A549 (cell line): ENCODE measurements at regions of chr17 and their contacts with region 1.

Region 1: GRCh38 chr17:75405365-75406221 is at the start of gene GRB2:
- DNase-seq: peak; percentile 97 to 99
- ATAC-seq: peak; percentile 82 to 92
- H3K4me3 ChIP-seq: peak within 1 kb of the TSS; percentile 96
- H3K27ac ChIP-seq: peak within 1 kb of the TSS; percentile 91 to 95
- H3K4me1 ChIP-seq: peaks cover 13% of the 10 kb centered on the region; the same call in 1 of the 3 replicates
- CTCF ChIP-seq: no peak
- EP300 ChIP-seq: no peak
- POLR2A ChIP-seq: peak; percentile 93
- RAD21 ChIP-seq: no peak
- polyA plus RNA-seq, gene GRB2: 87.5 and 91.4 TPM in 2 replicates

Region 2: GRCh38 chr17:75261336-75262111 is 144.1 kb before region 1 on chr17 and contains the starts of genes GGA3 and MRPS7:
- CTCF ChIA-PET with region 1: no interaction called
- POLR2A ChIA-PET with region 1: interaction called, 10 read pairs
- DNase-seq: peak; percentile 95 to 96
- ATAC-seq: peak; percentile 96 to 97
- H3K4me3 ChIP-seq: peak within 1 kb of the TSS; percentile 97
- H3K27ac ChIP-seq: peak within 1 kb of the TSS; percentile 96
- H3K4me1 ChIP-seq: peaks cover 22% of the 10 kb centered on the region
- CTCF ChIP-seq: no peak
- EP300 ChIP-seq: no peak
- POLR2A ChIP-seq: peak; percentile 91
- RAD21 ChIP-seq: no peak
- polyA plus RNA-seq, gene GGA3: 40.9 and 43.6 TPM in 2 replicates
- polyA plus RNA-seq, gene MRPS7: 144 and 157 TPM in 2 replicates

Region 3: DNA sequence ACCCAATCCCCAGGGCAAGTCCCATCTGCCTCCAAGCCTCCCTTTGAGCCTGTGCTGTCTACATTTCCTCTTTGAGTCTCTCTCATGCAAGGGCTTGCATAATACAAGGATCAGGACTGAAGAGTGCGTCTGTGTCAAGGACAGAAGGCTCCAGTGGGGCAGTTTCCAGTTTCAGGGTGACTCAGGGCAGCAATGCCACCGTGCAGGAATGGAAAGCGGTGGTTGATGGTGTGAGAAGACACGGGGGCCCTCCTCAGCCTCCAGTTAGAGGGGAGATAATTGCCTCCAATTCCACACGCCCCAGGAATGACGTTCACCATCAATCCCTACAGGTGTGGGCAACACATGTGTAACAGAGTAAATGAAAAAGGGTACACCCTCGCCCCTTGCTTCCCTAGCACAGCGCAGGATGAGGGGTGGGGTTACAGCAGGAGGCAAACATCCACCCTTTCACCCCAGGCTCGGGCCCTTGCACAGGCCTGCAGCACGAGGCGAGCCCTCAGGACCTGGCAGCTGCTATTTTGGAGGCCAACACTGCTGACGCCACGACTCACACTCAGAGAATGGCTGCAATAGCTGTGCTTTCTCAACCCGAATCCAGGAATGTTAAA is 91.5 kb before region 1 on chr17:
- CTCF ChIA-PET with region 1: interaction called, 272 read pairs
- POLR2A ChIA-PET with region 1: interaction called, 3 read pairs
- DNase-seq: no peak
- ATAC-seq: peak in 1 of 2 experiments; percentile 11; a peak in 1 of 6 replicates
- H3K4me3 ChIP-seq: no peak overlapping the region
- H3K27ac ChIP-seq: no peak overlapping the region
- H3K4me1 ChIP-seq: peaks cover 10% of the 10 kb centered on the region
- CTCF ChIP-seq: no peak
- EP300 ChIP-seq: no peak
- POLR2A ChIP-seq: no peak
- RAD21 ChIP-seq: no peak

Region 4: GRCh38 chr17:75393523-75394331 is 11.9 kb before region 1 on chr17:
- CTCF ChIA-PET with region 1: interaction called, 12 read pairs
- POLR2A ChIA-PET with region 1: interaction called, 19 read pairs
- DNase-seq: peak; percentile 98 to 99
- ATAC-seq: peak; percentile 99 to 100
- H3K4me3 ChIP-seq: peak overlapping the region; percentile 62
- H3K27ac ChIP-seq: peak overlapping the region; percentile 80 to 88
- H3K4me1 ChIP-seq: peaks cover 30% of the 10 kb centered on the region
- CTCF ChIP-seq: no peak
- EP300 ChIP-seq: no peak
- POLR2A ChIP-seq: peak; percentile 79
- RAD21 ChIP-seq: 0 out of 5 replicates have a peak, but pooled peaks of 1 of the 2 experiments have one; percentile 17